ENCODE measurements at regions of chr19 and their contacts with region 1.

Region 1: DNA sequence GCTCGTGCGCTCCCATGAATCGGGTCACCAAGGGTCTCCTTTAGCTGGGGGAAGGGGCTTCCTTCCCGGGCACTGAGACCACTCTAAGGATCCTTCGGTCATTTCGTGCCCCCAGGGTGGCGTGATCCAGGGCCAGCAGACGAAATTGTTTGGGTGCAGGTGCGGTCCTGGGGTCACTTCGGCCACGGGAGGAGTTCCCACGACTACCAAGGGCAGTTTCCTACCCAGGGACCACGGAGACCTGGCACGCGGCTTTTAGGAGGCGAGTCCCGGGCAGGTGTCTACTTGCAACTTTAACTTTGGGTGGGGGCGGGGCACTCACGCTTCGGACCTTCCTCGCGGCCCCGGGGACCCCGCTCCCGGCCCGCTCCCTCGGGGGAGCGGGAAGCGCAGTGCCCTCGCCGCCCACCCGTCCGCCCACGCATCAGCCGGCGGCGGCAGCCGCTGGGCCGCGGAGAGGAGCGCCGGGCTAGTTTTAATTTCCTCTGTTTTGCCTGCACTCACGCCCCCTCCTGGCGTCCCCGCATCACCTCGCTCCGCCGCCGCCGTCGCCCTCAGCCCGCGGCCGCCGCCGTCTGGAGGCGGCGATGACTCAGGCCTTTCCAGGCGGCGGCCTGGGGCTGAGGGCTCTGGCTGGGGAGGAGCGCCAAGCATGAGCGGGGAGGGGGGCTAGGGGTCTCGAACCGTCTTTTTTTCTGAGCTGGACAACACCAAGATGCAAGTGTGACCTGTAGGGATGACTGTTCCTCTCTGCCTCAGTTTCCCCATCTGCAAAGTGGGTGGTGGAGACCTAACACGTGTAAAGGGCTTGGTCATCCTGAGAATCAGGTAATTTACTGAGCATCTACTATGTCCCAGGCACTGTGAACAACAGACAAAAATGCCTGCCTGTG is 21.8 kb downstream of the OLFM2 start:
- DNase-seq: peak; percentile 93
- ATAC-seq: peak; percentile 90
- H3K4me3 ChIP-seq: peak overlapping the region; percentile 70
- H3K27ac ChIP-seq: no peak overlapping the region
- H3K4me1 ChIP-seq: peaks cover 9% of the 10 kb centered on the region
- H3K27me3 ChIP-seq: no peaks in the 10 kb centered on the region
- CTCF ChIP-seq: peak; percentile 85

Region 2: GRCh38 chr19:9289231-9289884 is 625.2 kb before region 1 on chr19:
- CTCF ChIA-PET with region 1: interaction called, 14 read pairs
- POLR2A ChIA-PET with region 1: no interaction called
- intact Hi-C with region 1: no loop called
- DNase-seq: peak; percentile 57
- ATAC-seq: peak; percentile 53
- H3K4me3 ChIP-seq: peak overlapping the region; percentile 8; the same call in 1 of the 2 replicates
- H3K27ac ChIP-seq: no peak overlapping the region
- H3K4me1 ChIP-seq: no peaks in the 10 kb centered on the region
- H3K27me3 ChIP-seq: no peaks in the 10 kb centered on the region
- CTCF ChIP-seq: no peak

Region 3: DNA sequence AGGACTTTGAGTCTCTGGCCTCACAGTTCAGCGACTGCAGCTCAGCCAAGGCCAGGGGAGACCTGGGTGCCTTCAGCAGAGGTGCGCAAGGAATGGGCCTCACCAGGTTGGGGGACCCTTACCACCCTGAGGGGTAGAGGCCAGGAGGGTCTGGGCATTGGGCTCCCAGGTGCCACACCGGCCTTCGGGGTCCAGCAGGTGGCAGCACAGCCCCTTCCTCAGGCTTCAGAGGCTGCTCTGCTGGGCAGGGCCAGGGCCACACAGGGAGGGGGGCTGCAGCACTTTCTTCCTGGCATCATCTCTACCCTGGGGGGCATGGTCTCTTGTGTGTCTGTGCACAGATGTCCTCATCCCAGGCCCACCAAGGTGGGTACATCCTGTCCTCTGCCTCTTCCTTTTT is 66.5 kb before region 1 on chr19:
- CTCF ChIA-PET with region 1: no interaction called
- POLR2A ChIA-PET with region 1: no interaction called
- intact Hi-C with region 1: loop called (anchors 1 kb)
- DNase-seq: peak; percentile 49
- ATAC-seq: peak; percentile 42
- H3K4me3 ChIP-seq: no peak overlapping the region
- H3K27ac ChIP-seq: no peak overlapping the region
- H3K4me1 ChIP-seq: peaks cover 5% of the 10 kb centered on the region; the same call in 1 of the 2 replicates
- H3K27me3 ChIP-seq: no peaks in the 10 kb centered on the region
- CTCF ChIP-seq: peak; percentile 85

Measured in PC-3 (cell line).